Activated CD4-positive, alpha-beta T cell treated with anti-CD3 and anti-CD28 coated beads for 36 hours (primary cell): ENCODE measurements at regions of chr17 and their contacts with region 1.

Region 1: GRCh38 chr17:75295201-75296158 is 6.2 kb upstream of the SLC25A19 start:
- DNase-seq: peak; percentile 57
- ATAC-seq: peak; percentile 83
- H3K4me3 Mint-ChIP-seq: peak overlapping the region; percentile 5
- H3K27ac Mint-ChIP-seq: peak overlapping the region; percentile 92
- H3K4me1 Mint-ChIP-seq: peaks cover 43% of the 10 kb centered on the region
- H3K27me3 Mint-ChIP-seq: no peaks in the 10 kb centered on the region

Region 2: DNA sequence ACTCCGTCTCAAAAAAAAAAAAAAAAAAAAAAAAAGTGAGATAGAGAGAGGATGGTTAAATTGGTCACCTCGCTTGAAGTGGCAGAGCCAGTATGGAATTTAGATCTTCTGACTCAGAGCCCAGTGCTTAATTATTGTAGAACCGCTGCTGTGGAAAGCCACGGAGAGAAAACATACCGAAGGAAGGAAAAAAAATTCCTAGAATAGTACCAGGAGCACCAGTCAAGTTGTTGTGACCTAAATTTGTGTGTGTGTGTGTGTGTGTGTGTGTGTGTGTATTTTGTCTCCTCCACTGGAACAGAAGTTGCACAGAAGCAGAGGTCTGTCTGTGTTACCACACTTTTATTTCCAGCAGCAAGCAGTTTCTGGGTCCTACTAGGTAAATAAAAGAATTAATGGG is 100.6 kb before region 1 on chr17:
- CTCF ChIA-PET with region 1: no interaction called
- POLR2A ChIA-PET with region 1: no interaction called
- intact Hi-C with region 1: no loop called
- DNase-seq: no peak
- ATAC-seq: no peak
- H3K4me3 Mint-ChIP-seq: no peak overlapping the region
- H3K27ac Mint-ChIP-seq: no peak overlapping the region
- H3K4me1 Mint-ChIP-seq: no peaks in the 10 kb centered on the region
- H3K27me3 Mint-ChIP-seq: no peaks in the 10 kb centered on the region

Region 3: DNA sequence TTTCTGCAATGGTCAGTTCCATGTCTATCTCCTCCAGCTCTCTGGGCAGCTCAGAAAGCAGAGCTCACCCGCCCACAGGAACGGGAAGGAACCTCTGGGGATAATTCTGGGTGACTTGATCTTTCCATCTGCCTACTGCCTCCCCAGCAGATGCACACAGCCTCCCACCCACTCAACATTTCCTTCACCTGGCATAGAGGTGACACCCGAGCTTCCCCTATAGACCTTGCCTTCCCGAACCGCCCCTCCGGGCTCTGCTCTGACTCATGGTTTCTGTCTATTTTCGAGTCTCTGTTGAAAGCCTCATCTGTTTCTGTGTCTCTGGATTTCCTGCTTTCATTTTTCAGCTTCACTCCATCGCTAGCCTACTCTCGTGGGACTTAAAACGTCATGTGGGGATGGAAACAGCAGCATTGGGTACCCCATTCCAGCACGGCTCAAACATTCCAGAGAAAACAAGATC is 45.4 kb before region 1 on chr17:
- CTCF ChIA-PET with region 1: interaction called, 8 read pairs
- POLR2A ChIA-PET with region 1: no interaction called
- intact Hi-C with region 1: loop called in 1 of 2 experiments (anchors 2 kb)
- DNase-seq: peak; percentile 90
- ATAC-seq: peak; percentile 97
- H3K4me3 Mint-ChIP-seq: peak overlapping the region; percentile 64
- H3K27ac Mint-ChIP-seq: peak overlapping the region; percentile 97
- H3K4me1 Mint-ChIP-seq: peaks cover 74% of the 10 kb centered on the region
- H3K27me3 Mint-ChIP-seq: no peaks in the 10 kb centered on the region